ENCODE measurements at regions of chr18 and their contacts with region 1.

Region 1: DNA sequence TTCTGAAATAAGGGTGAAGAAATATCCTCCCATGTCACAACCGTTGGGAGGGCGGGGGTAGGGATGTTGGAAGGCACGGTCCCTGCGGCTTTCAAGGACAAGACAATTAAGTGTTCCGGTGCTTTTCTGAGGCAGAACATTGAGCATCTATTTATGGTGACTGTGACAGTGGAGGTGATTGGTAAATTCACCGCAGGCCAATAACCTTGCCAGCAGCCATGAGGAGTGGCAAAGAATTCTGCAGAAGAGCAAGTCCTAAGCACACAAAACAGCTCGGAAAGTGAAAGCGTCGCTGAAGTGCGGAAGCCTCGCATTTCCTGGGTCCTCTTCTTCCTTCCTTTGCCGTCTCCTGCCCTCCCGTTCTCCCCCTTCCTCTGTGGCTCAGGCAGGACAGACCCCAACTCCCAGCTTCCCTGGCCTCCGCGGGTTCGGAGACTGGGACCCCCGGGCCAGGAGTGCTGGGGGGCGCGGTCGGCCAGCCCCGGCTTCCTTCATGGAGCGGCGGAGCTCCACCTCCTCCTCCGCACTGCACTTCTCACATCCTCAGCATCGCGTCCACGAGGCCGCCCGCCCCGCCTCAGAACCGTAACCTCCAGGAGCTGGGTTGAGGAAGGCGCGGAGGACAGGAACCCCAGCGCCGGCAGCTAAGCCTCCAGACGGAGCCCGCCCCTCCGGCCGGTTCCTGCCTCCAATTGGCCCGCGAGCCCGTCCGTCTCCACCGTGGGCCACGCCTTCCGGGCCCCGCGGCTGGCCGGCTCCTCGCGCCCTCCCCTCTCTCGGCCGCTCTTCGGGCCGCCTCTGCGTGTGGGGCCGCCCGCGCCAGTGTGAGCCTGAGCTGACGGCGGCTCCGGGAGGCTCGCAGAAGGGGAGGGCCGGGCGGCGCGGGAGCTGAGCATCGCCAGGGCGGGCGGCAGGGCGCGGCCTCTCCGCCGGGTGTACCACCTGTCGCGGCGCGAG is at the start of gene ME2:
- DNase-seq: peak; percentile 80 to 98 (median 95)

Region 2: DNA sequence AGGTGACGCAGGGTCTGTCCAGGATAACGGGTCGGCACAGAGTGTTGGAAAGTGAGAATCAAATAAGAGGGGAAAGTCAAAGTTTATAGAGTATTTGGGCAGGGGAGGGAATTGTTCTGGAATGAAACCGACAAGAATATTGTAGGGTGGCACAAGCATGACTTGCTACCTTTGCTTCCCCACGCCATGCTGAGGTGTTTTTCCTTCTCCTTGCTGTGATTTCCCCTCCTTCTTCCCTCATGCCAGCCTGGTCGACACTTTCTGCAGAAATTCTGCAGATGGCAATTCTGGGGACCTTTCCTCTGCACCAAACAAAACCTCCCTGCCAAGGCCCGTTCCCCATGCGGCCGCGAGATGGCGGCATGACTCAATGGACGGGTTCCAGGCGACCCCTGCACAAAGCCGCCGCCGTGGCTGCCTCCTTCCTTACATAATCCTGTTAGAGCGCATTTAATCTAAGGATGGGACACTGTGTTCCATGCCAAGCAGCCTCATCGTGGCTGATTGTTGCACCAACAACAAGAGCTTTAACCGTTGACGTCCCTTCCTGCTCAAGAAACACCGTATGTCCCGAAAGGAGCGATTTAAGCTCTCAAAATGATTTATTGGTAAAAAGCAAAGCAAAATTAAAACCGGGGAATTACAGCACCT is 58.8 kb before region 1 on chr18 and contains the start of gene MRO:
- intact Hi-C with region 1: loop called (anchors 5 kb)
- DNase-seq: peak; percentile 83 to 96 (median 90)

Region 3: GRCh38 chr18:50967714-50968661 is 89.4 kb after region 1 on chr18 and contains the start of gene ELAC1:
- intact Hi-C with region 1: loop called (anchors 5 kb)
- DNase-seq: peak; percentile 34 to 89 (median 78)

Region 4: DNA sequence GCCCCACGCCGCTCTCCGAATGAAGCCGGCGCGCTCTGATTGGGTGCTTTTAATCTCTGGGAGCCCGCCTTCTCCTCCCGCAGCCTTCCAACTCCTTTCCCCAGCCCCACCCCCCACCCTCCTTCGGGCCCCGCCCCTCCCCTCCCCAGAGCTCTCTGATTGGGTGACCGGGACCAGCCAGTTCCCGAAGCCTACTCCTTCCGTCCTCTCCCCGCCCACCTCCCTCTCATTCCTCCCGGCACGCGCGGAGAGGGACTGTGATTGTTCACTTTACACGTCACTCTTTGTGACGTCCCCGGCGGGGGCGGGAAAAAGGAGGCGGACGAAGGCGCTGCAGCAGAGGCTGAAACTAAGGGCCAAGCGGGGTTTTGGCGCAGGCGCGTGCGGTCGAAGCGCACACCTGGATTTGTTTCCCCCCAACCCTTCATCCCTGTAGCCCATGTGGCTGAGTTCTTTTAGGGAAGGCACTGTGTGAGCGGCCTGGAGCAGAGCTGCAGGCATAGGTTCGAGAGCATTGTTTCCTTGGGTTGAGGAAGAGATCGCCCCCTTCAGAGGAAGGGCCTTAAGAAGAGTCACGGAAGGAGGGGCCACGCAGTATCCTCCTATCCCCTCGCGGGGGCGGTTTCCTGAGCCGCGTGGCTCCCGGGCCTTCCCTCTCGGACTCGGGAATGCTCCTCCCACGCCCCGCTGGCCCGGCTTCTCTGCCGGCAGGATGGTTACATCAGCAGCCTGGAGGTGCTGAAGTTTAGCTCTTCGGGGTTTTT is 319.2 kb after region 1 on chr18 and contains the start of gene MEX3C:
- intact Hi-C with region 1: loop called (anchors 5 kb)
- DNase-seq: peak; percentile 98 to 100 (median 99)

Measured in head of caudate nucleus (tissue), 42 donors.